Panc1 (cell line): ENCODE measurements at regions of chr17 and their contacts with region 1.

Region 1: GRCh38 chr17:19648475-19649406 is at the start of gene ALDH3A2:
- DNase-seq: no peak
- ATAC-seq: peak; percentile 94
- H3K4me3 ChIP-seq: peak within 1 kb of the TSS; percentile 73 to 75
- H3K27ac ChIP-seq: peak within 1 kb of the TSS; percentile 89
- H3K4me1 ChIP-seq: peaks cover 41% of the 10 kb centered on the region
- H3K27me3 ChIP-seq: no peaks in the 10 kb centered on the region
- CTCF ChIP-seq: peak; percentile 35
- total RNA-seq, gene ALDH3A2: 44.4 TPM

Region 2: GRCh38 chr17:19513897-19514488 is 134.7 kb before region 1 on chr17:
- CTCF ChIA-PET with region 1: no interaction called
- POLR2A ChIA-PET with region 1: no interaction called
- in situ Hi-C with region 1: no loop called
- intact Hi-C with region 1: loop called (anchors 10 kb)
- DNase-seq: peak; percentile 51
- ATAC-seq: peak; percentile 86
- H3K4me3 ChIP-seq: no peak overlapping the region
- H3K27ac ChIP-seq: no peak overlapping the region
- H3K4me1 ChIP-seq: no peaks in the 10 kb centered on the region
- H3K27me3 ChIP-seq: no peaks in the 10 kb centered on the region
- CTCF ChIP-seq: peak; percentile 92

Region 3: GRCh38 chr17:19533718-19534561 is 114.8 kb before region 1 on chr17 and contains the start of gene SLC47A1:
- CTCF ChIA-PET with region 1: interaction called, 15 read pairs
- POLR2A ChIA-PET with region 1: interaction called, 3 read pairs
- in situ Hi-C with region 1: no loop called
- intact Hi-C with region 1: no loop called
- DNase-seq: no peak
- ATAC-seq: peak; percentile 99
- H3K4me3 ChIP-seq: peak within 1 kb of the TSS; percentile 64 to 68
- H3K27ac ChIP-seq: peak within 1 kb of the TSS; percentile 60
- H3K4me1 ChIP-seq: peaks cover 3% of the 10 kb centered on the region; the same call in 1 of the 2 replicates
- H3K27me3 ChIP-seq: no peaks in the 10 kb centered on the region
- CTCF ChIP-seq: no peak
- total RNA-seq, gene SLC47A1: 16.1 TPM

Region 4: GRCh38 chr17:19672009-19672750 is 23.4 kb after region 1 on chr17:
- CTCF ChIA-PET with region 1: no interaction called
- POLR2A ChIA-PET with region 1: no interaction called
- in situ Hi-C with region 1: no loop called
- intact Hi-C with region 1: no loop called
- DNase-seq: no peak
- ATAC-seq: no peak
- H3K4me3 ChIP-seq: no peak overlapping the region
- H3K27ac ChIP-seq: no peak overlapping the region
- H3K4me1 ChIP-seq: no peaks in the 10 kb centered on the region
- H3K27me3 ChIP-seq: no peaks in the 10 kb centered on the region
- CTCF ChIP-seq: peak; percentile 66